ENCODE measurements at regions of chrX and their contacts with region 1.

Region 1: DNA sequence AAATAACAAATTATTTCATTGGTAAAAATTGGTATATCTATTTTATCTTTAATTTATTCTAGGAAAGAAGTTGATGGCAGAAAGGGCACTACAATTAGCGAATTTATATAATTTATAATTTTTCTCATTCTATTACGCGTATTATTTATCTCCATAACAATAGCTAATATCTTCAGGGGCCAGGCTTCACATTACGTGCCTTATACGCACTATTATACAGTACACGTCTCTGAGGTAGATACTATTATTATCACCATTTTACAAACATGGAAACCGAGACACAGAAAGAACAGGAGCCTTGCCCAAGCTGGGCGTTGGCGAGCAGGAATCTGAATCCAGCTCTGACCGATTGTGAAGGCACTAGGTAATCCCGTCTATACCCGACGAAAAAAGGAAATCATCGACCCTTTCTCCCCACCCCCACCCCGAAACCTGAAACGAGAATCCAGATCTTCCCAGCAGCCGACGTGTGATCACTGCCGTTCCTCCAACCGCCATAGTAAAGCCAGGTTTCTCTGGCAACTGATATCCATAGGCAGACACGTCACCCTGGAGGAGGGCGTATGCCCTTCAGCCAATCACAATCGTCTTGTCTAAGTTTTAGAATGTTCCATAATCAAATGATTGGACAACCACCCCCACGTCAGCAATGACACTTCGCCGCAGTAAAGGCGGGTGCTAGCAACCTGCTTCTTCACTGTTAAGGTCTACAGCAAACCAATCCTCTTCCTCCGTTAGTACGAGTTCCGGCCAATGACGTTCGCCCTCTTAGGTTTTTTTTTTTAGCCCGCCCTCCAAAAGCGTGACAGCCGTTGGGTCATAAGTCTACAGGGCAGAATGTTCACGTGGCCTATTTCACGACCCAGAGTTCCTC is at the start of gene MORF4L2:
- DNase-seq: peak; percentile 93
- H3K4me3 Mint-ChIP-seq: peak within 1 kb of the TSS; percentile 81
- H3K27ac Mint-ChIP-seq: peak within 1 kb of the TSS; percentile 90
- H3K4me1 Mint-ChIP-seq: peaks cover 11% of the 10 kb centered on the region
- H3K27me3 Mint-ChIP-seq: no peaks in the 10 kb centered on the region
- total RNA-seq, gene MORF4L2: 181 to 183 TPM

Region 2: DNA sequence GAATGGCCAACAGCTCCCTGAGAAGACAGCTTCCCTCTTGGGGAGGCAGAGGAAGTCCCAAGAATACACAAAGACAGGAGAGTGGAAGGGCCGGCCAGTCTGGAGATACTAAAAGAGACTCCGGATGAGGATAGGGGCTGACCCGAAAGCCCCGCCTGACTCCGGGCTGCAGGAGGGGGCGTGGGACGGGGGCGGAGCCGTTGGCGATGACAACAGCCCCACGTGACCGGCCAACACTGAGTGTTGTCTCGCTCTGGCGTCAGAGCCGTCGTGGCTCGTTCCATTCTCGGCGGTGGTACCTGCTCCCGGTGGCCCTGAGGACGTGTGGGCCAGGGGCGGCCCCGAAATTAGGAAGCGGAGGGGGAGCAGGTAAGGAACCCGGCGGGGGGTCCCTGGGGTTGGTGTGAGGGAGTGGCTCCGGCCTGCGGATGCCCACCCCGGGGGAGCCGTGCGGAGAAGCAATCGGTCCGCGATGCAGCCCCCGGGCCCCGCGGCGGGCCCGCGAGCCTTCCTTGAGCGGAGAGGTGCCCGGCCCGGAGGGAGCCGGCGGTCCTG is 471.5 kb before region 1 on chrX and contains the start of gene BEX4:
- CTCF ChIA-PET with region 1: no interaction called
- intact Hi-C with region 1: loop called (anchors 5 kb)
- DNase-seq: peak; percentile 87
- H3K4me3 Mint-ChIP-seq: peak within 1 kb of the TSS; percentile 82
- H3K27ac Mint-ChIP-seq: peak within 1 kb of the TSS; percentile 50
- H3K4me1 Mint-ChIP-seq: peaks cover 15% of the 10 kb centered on the region
- H3K27me3 Mint-ChIP-seq: no peaks in the 10 kb centered on the region
- total RNA-seq, gene BEX4: 8.8 to 9.8 TPM

Region 3: GRCh38 chrX:103533511-103534216 is 152.8 kb before region 1 on chrX:
- CTCF ChIA-PET with region 1: interaction called, 3 read pairs
- intact Hi-C with region 1: loop called (anchors 1 kb)
- DNase-seq: peak; percentile 80
- H3K4me3 Mint-ChIP-seq: peak overlapping the region; percentile 48
- H3K27ac Mint-ChIP-seq: no peak overlapping the region
- H3K4me1 Mint-ChIP-seq: peaks cover 5% of the 10 kb centered on the region
- H3K27me3 Mint-ChIP-seq: no peaks in the 10 kb centered on the region

Region 4: GRCh38 chrX:103629318-103630170 is 56.9 kb before region 1 on chrX:
- CTCF ChIA-PET with region 1: interaction called, 5 read pairs
- intact Hi-C with region 1: loop called (anchors 1 kb)
- DNase-seq: peak; percentile 33
- H3K4me3 Mint-ChIP-seq: peak overlapping the region; percentile 87
- H3K27ac Mint-ChIP-seq: peak overlapping the region; percentile 87
- H3K4me1 Mint-ChIP-seq: peaks cover 19% of the 10 kb centered on the region
- H3K27me3 Mint-ChIP-seq: no peaks in the 10 kb centered on the region

Region 5: GRCh38 chrX:103656632-103657031 is 29.8 kb before region 1 on chrX:
- CTCF ChIA-PET with region 1: no interaction called
- intact Hi-C with region 1: no loop called
- DNase-seq: no peak
- H3K4me3 Mint-ChIP-seq: no peak overlapping the region
- H3K27ac Mint-ChIP-seq: no peak overlapping the region
- H3K4me1 Mint-ChIP-seq: peaks cover 3% of the 10 kb centered on the region
- H3K27me3 Mint-ChIP-seq: no peaks in the 10 kb centered on the region

Region 6: GRCh38 chrX:103817502-103817901 is 131.1 kb after region 1 on chrX:
- CTCF ChIA-PET with region 1: no interaction called
- intact Hi-C with region 1: loop called (anchors 1 kb)
- DNase-seq: peak; percentile 25
- H3K4me3 Mint-ChIP-seq: no peak overlapping the region
- H3K27ac Mint-ChIP-seq: no peak overlapping the region
- H3K4me1 Mint-ChIP-seq: no peaks in the 10 kb centered on the region
- H3K27me3 Mint-ChIP-seq: peaks cover 8% of the 10 kb centered on the region

Region 7: GRCh38 chrX:103941201-103941975 is 255.0 kb after region 1 on chrX:
- CTCF ChIA-PET with region 1: no interaction called
- intact Hi-C with region 1: no loop called
- DNase-seq: peak; percentile 5
- H3K4me3 Mint-ChIP-seq: no peak overlapping the region
- H3K27ac Mint-ChIP-seq: no peak overlapping the region
- H3K4me1 Mint-ChIP-seq: peaks cover 34% of the 10 kb centered on the region
- H3K27me3 Mint-ChIP-seq: no peaks in the 10 kb centered on the region

Region 8: DNA sequence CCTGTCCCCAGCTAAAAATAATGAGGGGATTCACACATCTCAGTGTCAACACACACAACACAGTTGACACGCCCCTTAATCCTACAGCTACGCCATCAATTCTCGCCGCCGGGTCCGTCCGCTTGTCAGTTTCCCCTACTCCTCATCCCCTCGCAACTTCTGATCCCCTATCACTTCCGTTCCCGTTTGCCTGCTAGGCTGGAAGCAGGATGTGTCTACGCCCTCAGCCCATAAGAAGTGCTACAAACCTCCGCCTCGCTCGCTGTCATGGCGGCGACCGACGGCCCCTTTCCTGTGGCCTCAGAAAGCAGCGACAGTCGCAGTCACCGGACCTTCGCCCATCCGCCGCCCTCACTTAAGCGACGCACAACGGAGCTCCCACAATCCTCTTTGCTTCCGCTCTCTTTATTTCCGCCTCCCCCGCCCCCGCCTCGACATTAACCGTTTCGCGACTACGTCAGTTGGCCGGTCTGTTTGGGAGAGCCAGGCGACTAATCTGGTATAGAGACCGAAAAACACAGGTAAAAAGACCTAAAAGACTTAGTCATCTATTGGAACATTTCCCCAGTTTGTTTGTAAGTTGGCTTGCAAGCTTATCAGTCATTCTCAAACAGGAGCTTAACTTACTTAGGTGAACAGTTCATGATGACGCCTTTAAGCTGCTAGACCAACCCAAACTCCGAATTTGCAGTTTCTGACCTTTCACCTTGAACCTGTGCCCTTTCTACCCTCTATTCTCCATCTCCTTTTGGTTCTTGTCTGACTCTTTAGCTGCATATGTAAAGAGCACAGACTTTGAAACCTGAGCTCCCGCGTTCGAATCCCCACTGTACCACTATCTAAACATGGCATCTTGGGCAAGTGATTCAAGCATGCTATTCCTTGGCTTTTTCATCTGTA is 470.4 kb after region 1 on chrX and contains the start of gene SLC25A53:
- CTCF ChIA-PET with region 1: no interaction called
- intact Hi-C with region 1: loop called (anchors 1 kb)
- DNase-seq: peak; percentile 85
- H3K4me3 Mint-ChIP-seq: peak within 1 kb of the TSS; percentile 92
- H3K27ac Mint-ChIP-seq: peak within 1 kb of the TSS; percentile 98
- H3K4me1 Mint-ChIP-seq: peaks cover 9% of the 10 kb centered on the region
- H3K27me3 Mint-ChIP-seq: no peaks in the 10 kb centered on the region
- total RNA-seq, gene SLC25A53: 4.6 to 5.0 TPM